ENCODE measurements at regions of chr2 and their contacts with region 1.

Region 1: GRCh38 chr2:144519934-144520731 is at the start of gene ZEB2:
- DNase-seq: peak; percentile 50 to 93 (median 68)
- ATAC-seq: peak; percentile 58
- H3K4me3 ChIP-seq: peak within 1 kb of the TSS; percentile 91
- H3K27ac ChIP-seq: peak within 1 kb of the TSS; percentile 95
- H3K4me1 ChIP-seq: peaks cover 13 to 19% of the 10 kb centered on the region in 2 experiments
- H3K27me3 ChIP-seq: no peaks in the 10 kb centered on the region
- CTCF ChIP-seq: peak; percentile 61 to 81 (median 79)
- EP300 ChIP-seq: peak; percentile 55
- POLR2A ChIP-seq: peak; percentile 98
- RAD21 ChIP-seq: peak; percentile 56 to 61
- polyA plus RNA-seq, gene ZEB2: 15.1 to 30.1 TPM

Region 2: GRCh38 chr2:144152817-144153271 is 367.3 kb before region 1 on chr2:
- CTCF ChIA-PET with region 1: no interaction called
- POLR2A ChIA-PET with region 1: no interaction called
- in situ Hi-C with region 1: no loop called
- intact Hi-C with region 1: loop called (anchors 10 kb)
- DNase-seq: peak in 3 of 4 experiments; percentile 10 to 84 (median 71)
- ATAC-seq: peak; percentile 91
- H3K4me3 ChIP-seq: no peak overlapping the region
- H3K27ac ChIP-seq: peak overlapping the region; percentile 65; the same call in 2 of the 3 replicates
- H3K4me1 ChIP-seq: peaks cover 0 to 26% of the 10 kb centered on the region in 2 experiments; a peak in 4 of 5 replicates
- H3K27me3 ChIP-seq: no peaks in the 10 kb centered on the region
- CTCF ChIP-seq: peak; percentile 30 to 44 (median 34); a peak in 3 of 6 replicates
- EP300 ChIP-seq: peak; percentile 83
- POLR2A ChIP-seq: no peak
- RAD21 ChIP-seq: peak; percentile 54 to 57

Region 3: DNA sequence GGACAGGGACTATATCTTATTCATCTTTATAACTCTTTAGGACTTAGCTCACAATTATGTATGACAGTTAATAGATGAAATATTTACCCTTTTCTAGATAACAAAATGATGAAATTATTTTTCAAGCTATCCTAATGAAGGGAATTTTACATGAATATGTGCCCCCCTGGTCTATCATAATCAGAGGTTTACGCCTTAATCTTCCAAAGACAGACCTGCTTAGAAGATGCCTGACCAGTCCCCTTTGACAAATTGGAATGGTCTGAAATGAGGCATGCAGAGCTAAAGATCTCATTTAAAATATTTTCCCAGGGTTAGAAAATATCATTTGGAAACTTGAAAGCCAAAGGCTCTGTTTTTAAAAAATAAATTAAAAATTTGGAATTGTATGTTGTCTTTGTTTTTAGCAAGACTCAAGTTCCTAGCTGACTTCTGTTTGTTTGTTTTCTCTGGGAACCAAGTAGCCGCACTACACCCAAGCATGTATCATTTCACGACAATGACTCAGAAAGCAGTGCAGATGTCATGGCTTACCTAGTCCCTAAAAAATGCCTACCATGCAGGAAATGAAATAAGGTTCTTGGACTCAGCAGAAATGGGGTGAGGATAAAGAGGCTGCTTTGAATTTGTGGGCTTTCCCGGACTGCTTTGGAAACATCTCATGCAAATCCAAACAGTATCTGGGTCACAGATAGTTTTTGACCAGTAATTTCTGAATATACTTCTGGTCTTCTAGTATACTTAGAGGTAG is 162.3 kb before region 1 on chr2:
- CTCF ChIA-PET with region 1: no interaction called
- POLR2A ChIA-PET with region 1: no interaction called
- in situ Hi-C with region 1: no loop called
- intact Hi-C with region 1: loop called (anchors 5 kb)
- DNase-seq: peak; percentile 32 to 75 (median 48)
- ATAC-seq: peak; percentile 76
- H3K4me3 ChIP-seq: no peak overlapping the region
- H3K27ac ChIP-seq: peak overlapping the region; percentile 45
- H3K4me1 ChIP-seq: peaks cover 3 to 33% of the 10 kb centered on the region in 2 experiments; a peak in 4 of 5 replicates
- H3K27me3 ChIP-seq: no peaks in the 10 kb centered on the region
- CTCF ChIP-seq: no peak
- EP300 ChIP-seq: no peak
- POLR2A ChIP-seq: no peak
- RAD21 ChIP-seq: no peak

Region 4: DNA sequence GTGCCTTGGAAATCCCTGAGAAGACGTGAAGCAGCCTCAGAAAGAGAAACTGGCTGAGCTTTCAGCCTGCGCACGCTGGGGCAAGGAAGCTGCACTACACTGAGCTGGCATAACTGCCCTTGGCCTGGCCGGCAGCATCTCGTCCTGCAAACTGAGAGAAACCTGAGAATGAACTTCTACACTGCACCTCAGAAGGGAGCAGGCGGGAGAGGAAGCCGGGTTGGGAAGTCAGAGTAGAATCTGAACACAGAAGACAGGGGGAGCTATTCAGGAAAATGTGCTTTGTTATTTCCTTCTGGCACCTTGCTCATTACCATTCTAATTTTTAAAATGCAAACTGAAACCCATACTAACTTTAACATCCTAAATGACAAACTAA is 71.1 kb before region 1 on chr2:
- CTCF ChIA-PET with region 1: no interaction called
- POLR2A ChIA-PET with region 1: no interaction called
- in situ Hi-C with region 1: no loop called
- intact Hi-C with region 1: no loop called
- DNase-seq: no peak
- ATAC-seq: peak; percentile 26
- H3K4me3 ChIP-seq: no peak overlapping the region
- H3K27ac ChIP-seq: no peak overlapping the region
- H3K4me1 ChIP-seq: peaks cover 5 to 34% of the 10 kb centered on the region in 2 experiments; a peak in 3 of 5 replicates
- H3K27me3 ChIP-seq: no peaks in the 10 kb centered on the region
- CTCF ChIP-seq: peak in 2 of 3 experiments; percentile 32 to 37; a peak in 2 of 6 replicates
- EP300 ChIP-seq: no peak
- POLR2A ChIP-seq: no peak
- RAD21 ChIP-seq: no peak

Region 5: GRCh38 chr2:144659731-144660275 is 139.7 kb after region 1 on chr2:
- CTCF ChIA-PET with region 1: no interaction called
- POLR2A ChIA-PET with region 1: no interaction called
- in situ Hi-C with region 1: no loop called
- intact Hi-C with region 1: loop called (anchors 5 kb)
- DNase-seq: peak; percentile 48 to 88 (median 66)
- ATAC-seq: peak; percentile 92
- H3K4me3 ChIP-seq: no peak overlapping the region
- H3K27ac ChIP-seq: peak overlapping the region; percentile 90
- H3K4me1 ChIP-seq: peaks cover 9 to 40% of the 10 kb centered on the region in 2 experiments; a peak in 4 of 5 replicates
- H3K27me3 ChIP-seq: no peaks in the 10 kb centered on the region
- CTCF ChIP-seq: no peak
- EP300 ChIP-seq: peak; percentile 42; the same call in 1 of the 2 replicates
- POLR2A ChIP-seq: no peak
- RAD21 ChIP-seq: peak in 1 of 2 experiments; percentile 26; a peak in 3 of 4 replicates

Region 6: GRCh38 chr2:145043399-145043834 is 523.3 kb after region 1 on chr2:
- CTCF ChIA-PET with region 1: no interaction called
- POLR2A ChIA-PET with region 1: no interaction called
- in situ Hi-C with region 1: no loop called
- intact Hi-C with region 1: loop called (anchors 10 kb)
- DNase-seq: peak in 2 of 4 experiments; percentile 8 to 12
- ATAC-seq: peak; percentile 72
- H3K4me3 ChIP-seq: no peak overlapping the region
- H3K27ac ChIP-seq: no peak overlapping the region
- H3K4me1 ChIP-seq: no peaks in the 10 kb centered on the region
- H3K27me3 ChIP-seq: no peaks in the 10 kb centered on the region
- CTCF ChIP-seq: peak; percentile 5 to 26 (median 23); a peak in 2 of 6 replicates
- EP300 ChIP-seq: no peak
- POLR2A ChIP-seq: no peak
- RAD21 ChIP-seq: peak; percentile 56 to 60

Measured in K562 (cell line).